ENCODE measurements at regions of chr3 and their contacts with region 1.

Region 1: GRCh38 chr3:48898383-48899234 is at the start of gene SLC25A20:
- DNase-seq: peak; percentile 94
- H3K4me3 Mint-ChIP-seq: peak within 1 kb of the TSS; percentile 92
- H3K27ac Mint-ChIP-seq: peak within 1 kb of the TSS; percentile 91
- H3K4me1 Mint-ChIP-seq: peaks cover 29% of the 10 kb centered on the region
- H3K27me3 Mint-ChIP-seq: no peaks in the 10 kb centered on the region
- total RNA-seq, gene SLC25A20: 12.9 to 16.2 TPM

Region 2: DNA sequence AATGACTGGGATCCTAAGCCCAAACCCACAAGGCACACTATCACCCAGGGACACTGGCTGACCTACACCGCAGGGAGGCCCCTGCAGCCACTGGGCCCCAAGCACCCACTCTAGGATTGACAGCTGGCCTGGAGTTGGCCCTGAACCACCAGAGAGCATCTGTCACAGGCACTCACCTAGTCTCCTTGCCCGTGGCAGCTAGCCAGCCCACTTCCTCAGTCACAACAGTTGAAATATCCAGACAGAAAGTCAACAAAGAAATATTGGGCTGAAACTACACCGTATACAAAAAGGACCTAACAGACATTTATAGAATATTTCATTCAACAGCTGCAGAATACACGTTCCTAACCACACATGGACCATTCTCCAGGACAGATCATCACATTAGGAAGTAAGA is 560.0 kb before region 1 on chr3:
- CTCF ChIA-PET with region 1: no interaction called
- intact Hi-C with region 1: no loop called
- DNase-seq: no peak
- H3K4me3 Mint-ChIP-seq: no peak overlapping the region
- H3K27ac Mint-ChIP-seq: no peak overlapping the region
- H3K4me1 Mint-ChIP-seq: no peaks in the 10 kb centered on the region
- H3K27me3 Mint-ChIP-seq: peaks cover 6% of the 10 kb centered on the region

Region 3: DNA sequence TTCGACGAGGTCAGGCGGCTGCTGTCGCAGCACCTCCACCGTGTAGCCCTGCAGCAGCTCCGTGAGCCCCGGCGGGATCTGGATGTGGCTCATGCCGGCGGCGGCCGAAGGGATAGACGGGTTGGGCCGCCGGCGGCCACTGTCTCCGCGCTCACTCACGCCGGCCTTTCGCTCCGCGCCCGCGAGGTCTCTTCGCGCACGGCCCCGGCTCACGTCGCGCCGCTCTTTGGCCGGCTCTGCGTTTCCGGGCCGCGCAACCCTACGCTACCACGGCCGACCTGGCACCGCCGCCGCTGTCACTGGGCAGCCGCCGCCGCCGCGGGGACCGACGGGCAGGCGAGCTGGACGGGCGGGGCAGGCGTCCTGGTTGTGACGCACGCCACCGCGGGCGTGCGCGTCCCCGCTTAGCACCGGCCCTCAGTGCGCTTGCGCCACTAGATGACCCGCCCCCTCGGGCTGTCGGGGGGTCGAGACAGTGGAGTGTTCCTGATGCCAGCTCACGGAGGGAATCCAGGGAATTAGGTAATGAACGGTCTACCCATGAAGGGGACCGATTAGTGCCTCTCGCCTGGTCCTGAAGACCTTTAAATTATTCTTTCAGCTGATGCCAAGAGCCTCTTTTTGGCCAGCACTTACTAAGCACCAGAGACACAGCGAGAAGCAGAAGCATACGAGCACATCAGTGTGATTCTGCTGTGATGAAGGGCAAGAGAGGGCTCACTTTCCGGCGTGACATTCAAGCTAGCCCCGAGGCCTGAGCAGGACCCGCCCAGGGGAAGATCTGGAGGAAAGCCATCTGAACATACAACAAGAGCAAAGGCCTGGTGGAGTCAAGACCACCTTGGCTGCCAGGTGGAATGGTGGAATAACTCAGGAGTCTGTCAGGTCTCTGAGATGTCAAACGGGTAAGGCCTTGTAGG is 50.8 kb before region 1 on chr3 and contains the start of gene PRKAR2A:
- CTCF ChIA-PET with region 1: no interaction called
- intact Hi-C with region 1: loop called (anchors 2 kb)
- DNase-seq: peak; percentile 81
- H3K4me3 Mint-ChIP-seq: peak within 1 kb of the TSS; percentile 84
- H3K27ac Mint-ChIP-seq: peak within 1 kb of the TSS; percentile 80
- H3K4me1 Mint-ChIP-seq: peaks cover 29% of the 10 kb centered on the region
- H3K27me3 Mint-ChIP-seq: no peaks in the 10 kb centered on the region
- total RNA-seq, gene PRKAR2A: 18.5 to 21.7 TPM

Region 4: DNA sequence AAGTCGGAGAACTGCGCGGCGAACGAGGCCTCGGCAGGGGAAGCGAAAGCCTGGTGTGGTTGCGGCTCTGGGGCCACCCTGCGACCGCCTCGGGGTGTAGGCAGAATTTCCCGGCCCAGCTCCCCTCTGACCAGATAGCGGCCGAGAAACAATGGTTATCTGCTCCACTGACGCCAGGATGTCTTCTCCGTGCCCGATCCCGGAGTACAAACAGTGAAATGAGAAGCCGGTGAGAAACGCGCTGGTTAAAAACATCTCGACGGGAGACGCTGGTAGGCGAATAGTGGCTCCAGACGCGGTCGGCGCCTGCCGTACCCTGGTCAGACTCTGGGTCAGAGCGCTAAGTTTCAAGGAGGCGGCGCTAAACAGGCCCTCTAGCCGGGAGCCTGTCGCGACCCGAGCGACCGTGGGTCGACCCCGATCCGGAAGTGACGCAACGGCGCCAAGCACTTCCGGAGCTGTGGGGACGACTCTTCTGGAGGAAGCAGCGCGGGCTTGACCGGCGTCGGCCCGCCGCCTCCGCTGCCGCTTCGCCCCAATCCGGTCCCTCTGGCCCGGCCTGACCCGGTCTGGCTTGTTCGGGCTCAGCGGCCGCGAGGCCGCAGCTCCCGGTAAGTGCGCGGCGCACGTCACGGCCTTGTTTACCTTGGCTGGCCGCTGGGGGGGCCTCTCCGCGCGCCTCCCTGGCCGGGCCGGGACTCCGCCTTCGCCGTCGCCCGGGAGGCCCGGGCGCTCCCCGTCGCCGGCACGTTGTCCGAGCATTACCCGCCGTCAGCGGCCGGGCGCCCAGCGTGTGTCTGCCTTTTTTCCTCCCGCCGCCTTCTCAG is 20.0 kb after region 1 on chr3 and contains the start of gene ARIH2:
- CTCF ChIA-PET with region 1: interaction called, 9 read pairs
- intact Hi-C with region 1: loop called (anchors 1 kb)
- DNase-seq: peak; percentile 89
- H3K4me3 Mint-ChIP-seq: peak within 1 kb of the TSS; percentile 98
- H3K27ac Mint-ChIP-seq: peak within 1 kb of the TSS; percentile 100
- H3K4me1 Mint-ChIP-seq: peaks cover 29% of the 10 kb centered on the region
- H3K27me3 Mint-ChIP-seq: no peaks in the 10 kb centered on the region
- total RNA-seq, gene ARIH2: 96.1 to 99.1 TPM

Region 5: GRCh38 chr3:48929358-48930035 is 30.9 kb after region 1 on chr3:
- CTCF ChIA-PET with region 1: interaction called, 9 read pairs
- intact Hi-C with region 1: loop called (anchors 5 kb)
- DNase-seq: no peak
- H3K4me3 Mint-ChIP-seq: no peak overlapping the region
- H3K27ac Mint-ChIP-seq: peak overlapping the region; percentile 37
- H3K4me1 Mint-ChIP-seq: peaks cover 71% of the 10 kb centered on the region
- H3K27me3 Mint-ChIP-seq: no peaks in the 10 kb centered on the region

Region 6: DNA sequence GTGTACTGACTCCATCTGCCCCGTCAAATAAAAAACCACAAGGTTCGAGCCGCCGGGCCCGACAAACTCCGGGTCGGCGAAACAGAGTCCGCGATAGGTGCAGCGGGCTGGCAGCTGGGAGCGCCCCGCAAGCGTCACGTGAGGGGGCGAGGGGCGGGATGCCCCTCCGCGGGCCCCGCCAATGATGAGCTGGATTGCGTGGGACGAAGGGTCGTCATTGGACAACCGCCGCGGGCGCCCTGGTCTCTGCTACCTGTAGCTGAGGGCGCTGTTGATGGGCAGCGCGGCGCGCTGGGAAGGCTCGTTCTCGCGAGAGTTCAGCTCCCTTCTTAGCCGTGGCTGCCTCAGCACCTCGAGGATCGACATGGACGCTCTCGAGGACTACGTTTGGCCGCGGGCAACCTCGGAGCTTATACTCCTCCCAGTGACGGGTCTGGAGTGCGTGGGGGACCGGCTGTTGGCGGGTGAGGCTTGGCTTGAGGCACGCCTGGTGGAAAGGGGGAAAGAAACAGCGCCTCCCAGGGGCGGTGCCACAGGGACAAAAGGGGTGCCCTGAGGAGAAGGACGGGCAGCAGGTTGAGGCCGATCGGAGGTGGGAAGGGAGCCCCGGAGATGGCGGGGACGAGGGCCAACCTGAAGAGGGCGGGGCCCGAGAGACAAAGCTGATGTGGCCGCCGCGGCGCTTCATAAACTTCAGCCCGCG is 108.6 kb after region 1 on chr3 and contains the start of gene WDR6:
- CTCF ChIA-PET with region 1: no interaction called
- intact Hi-C with region 1: loop called (anchors 1 kb)
- DNase-seq: peak; percentile 99
- H3K4me3 Mint-ChIP-seq: peak within 1 kb of the TSS; percentile 99
- H3K27ac Mint-ChIP-seq: peak within 1 kb of the TSS; percentile 99
- H3K4me1 Mint-ChIP-seq: peaks cover 19% of the 10 kb centered on the region
- H3K27me3 Mint-ChIP-seq: no peaks in the 10 kb centered on the region
- total RNA-seq, gene WDR6: 119 to 120 TPM